Activated CD8-positive, alpha-beta T cell treated with anti-CD3 and anti-CD28 coated beads, Interleukin-2, amount 10 ng/mL, durations not matched to agents 7 days and 5 days (primary cell): ENCODE measurements at regions of chr11 and their contacts with region 1.

Region 1: DNA sequence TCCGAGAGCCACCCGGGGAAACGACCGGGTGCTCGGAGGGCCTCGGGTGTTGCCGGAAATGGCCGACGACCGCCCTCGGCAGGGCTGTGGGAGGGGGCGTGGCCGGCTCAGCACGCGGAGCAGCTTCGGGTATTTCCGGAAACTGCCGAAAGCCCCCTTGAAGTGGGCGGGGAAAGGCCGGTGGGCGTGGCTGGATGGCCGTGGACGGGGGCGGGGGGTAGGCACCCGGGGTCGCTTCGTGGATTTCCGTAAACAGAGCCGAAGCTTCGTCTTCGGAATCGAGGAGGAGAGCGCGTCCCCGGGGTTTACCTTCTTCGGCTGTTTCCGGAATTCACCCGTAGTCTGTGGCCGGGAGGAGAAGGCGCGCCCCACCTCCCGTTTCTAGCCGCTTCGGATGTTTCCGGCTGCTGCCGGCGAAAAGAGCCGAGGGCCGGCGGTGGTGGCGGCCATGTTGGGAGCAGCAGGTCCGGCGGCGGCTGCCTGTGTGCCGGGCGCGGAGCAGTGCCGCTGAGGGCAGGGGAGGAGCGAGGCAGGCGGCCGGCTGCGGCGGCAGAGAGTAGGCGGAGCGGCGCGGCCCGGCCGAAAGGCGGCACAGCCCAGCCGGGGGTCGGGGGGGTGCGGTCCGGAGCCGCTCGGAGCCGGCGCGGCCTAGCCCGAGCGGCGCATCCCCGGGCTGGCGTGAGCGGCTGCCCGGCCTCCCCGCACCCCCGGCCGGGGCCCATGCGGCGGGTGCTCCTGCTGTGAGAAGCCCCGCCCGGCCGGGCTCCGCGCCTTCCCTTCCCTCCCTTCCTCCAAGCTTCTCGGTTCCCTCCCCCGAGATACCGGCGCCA is at the start of gene MARK2:
- DNase-seq: peak; percentile 100
- ATAC-seq: peak; percentile 91
- H3K4me3 Mint-ChIP-seq: peak within 1 kb of the TSS; percentile 86
- H3K27ac Mint-ChIP-seq: peak within 1 kb of the TSS; percentile 85
- H3K4me1 Mint-ChIP-seq: peaks cover 62% of the 10 kb centered on the region
- H3K27me3 Mint-ChIP-seq: no peaks in the 10 kb centered on the region
- total RNA-seq, gene MARK2: 62.1 to 68.6 TPM

Region 2: GRCh38 chr11:63729326-63729725 is 109.6 kb before region 1 on chr11:
- CTCF ChIA-PET with region 1: no interaction called
- POLR2A ChIA-PET with region 1: no interaction called
- DNase-seq: no peak
- ATAC-seq: no peak
- H3K4me3 Mint-ChIP-seq: no peak overlapping the region
- H3K27ac Mint-ChIP-seq: no peak overlapping the region
- H3K4me1 Mint-ChIP-seq: no peaks in the 10 kb centered on the region
- H3K27me3 Mint-ChIP-seq: no peaks in the 10 kb centered on the region

Region 3: DNA sequence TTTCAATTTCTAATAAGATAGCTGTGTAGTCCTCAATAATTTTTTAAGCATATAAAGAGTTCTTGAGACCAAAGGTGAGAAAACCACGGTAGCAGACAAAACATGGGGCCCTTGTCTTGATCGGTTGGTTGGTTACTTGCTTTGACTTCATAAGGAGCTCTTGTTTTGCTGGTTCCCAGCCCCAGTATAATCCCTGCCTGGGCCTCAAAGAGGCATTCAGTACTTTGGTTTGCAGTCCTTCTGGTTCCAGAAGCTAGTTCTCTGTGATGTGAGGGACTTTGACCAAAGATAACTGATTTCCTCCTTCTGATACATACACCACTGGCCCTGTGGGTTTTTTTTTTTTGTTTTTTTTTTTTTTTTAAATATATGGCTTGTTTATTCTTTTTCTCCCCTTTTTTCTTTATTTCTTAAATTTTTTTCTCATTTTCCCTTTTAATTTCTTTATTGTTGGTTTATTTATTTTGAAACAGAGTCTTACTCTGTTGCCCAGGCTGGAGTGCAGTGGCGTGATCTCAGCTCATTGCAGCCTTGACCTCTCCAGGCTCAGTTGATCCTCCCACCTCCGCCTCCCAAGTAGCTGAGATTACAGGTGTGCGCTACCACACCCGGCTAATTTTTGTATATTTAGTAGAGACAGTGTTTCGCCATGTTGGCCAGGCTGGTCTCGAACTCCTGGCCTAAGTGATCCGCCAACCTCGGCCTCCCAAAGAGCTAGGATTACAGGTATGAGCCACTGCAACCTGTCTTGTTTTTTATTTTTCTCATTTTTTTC is 17.3 kb after region 1 on chr11:
- CTCF ChIA-PET with region 1: interaction called, 18 read pairs
- POLR2A ChIA-PET with region 1: interaction called, 5 read pairs
- DNase-seq: no peak
- ATAC-seq: peak; percentile 70
- H3K4me3 Mint-ChIP-seq: no peak overlapping the region
- H3K27ac Mint-ChIP-seq: peak overlapping the region; percentile 70
- H3K4me1 Mint-ChIP-seq: peaks cover 59% of the 10 kb centered on the region
- H3K27me3 Mint-ChIP-seq: no peaks in the 10 kb centered on the region

Region 4: GRCh38 chr11:63882555-63883242 is 43.8 kb after region 1 on chr11:
- CTCF ChIA-PET with region 1: interaction called, 111 read pairs
- POLR2A ChIA-PET with region 1: interaction called, 4 read pairs
- DNase-seq: no peak
- ATAC-seq: peak; percentile 51
- H3K4me3 Mint-ChIP-seq: no peak overlapping the region
- H3K27ac Mint-ChIP-seq: peak overlapping the region; percentile 55
- H3K4me1 Mint-ChIP-seq: peaks cover 73% of the 10 kb centered on the region
- H3K27me3 Mint-ChIP-seq: no peaks in the 10 kb centered on the region

Region 5: DNA sequence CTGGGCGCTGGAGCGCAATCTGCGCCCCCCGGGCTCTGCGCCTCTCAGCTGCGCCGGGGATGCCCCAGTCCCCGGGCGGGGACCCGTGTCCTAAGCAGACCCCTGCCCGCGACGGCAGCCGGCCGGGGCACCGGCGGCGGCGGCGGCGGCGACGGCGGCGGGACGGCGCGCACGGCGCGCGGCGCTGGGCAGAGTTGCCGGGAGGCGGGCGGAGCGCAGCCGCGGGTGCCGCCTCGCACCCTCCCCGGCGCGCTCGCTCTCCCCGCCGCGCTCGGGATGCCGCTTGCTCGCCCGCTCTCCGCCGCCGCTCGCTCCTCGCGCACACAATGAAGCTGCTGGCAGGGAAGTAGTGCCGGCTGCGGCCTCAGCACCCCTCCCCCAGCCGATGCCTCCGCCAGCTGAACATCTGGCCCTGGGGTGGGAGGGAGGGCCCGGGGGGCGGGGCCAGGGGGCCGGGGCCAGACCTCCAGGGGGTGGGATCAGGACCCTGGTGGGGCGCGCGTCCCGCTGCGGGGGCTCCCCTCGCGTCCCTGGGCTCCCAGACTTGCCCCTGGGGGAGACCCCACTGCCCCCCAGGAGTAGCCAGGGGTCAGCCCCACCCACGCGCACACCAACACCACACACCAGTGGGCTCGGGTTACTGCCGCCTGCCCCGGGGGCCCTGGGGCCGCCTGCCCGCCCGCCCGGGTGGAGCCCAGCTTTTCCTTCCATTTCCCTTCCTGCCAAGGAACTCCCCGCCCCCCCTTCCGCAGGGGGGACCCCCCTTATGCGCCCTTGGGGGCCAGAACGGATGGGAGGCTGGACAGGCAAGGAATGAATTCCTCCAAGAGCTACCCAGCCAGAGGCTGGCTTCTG is 78.2 kb after region 1 on chr11 and contains the start of gene RCOR2:
- CTCF ChIA-PET with region 1: interaction called, 49 read pairs
- POLR2A ChIA-PET with region 1: no interaction called
- DNase-seq: peak; percentile 69
- ATAC-seq: peak; percentile 77
- H3K4me3 Mint-ChIP-seq: peak within 1 kb of the TSS; percentile 78
- H3K27ac Mint-ChIP-seq: no peak within 1 kb of the TSS
- H3K4me1 Mint-ChIP-seq: peaks cover 12% of the 10 kb centered on the region
- H3K27me3 Mint-ChIP-seq: peaks cover 8% of the 10 kb centered on the region
- total RNA-seq, gene RCOR2: 0.55 to 0.60 TPM

Region 6: DNA sequence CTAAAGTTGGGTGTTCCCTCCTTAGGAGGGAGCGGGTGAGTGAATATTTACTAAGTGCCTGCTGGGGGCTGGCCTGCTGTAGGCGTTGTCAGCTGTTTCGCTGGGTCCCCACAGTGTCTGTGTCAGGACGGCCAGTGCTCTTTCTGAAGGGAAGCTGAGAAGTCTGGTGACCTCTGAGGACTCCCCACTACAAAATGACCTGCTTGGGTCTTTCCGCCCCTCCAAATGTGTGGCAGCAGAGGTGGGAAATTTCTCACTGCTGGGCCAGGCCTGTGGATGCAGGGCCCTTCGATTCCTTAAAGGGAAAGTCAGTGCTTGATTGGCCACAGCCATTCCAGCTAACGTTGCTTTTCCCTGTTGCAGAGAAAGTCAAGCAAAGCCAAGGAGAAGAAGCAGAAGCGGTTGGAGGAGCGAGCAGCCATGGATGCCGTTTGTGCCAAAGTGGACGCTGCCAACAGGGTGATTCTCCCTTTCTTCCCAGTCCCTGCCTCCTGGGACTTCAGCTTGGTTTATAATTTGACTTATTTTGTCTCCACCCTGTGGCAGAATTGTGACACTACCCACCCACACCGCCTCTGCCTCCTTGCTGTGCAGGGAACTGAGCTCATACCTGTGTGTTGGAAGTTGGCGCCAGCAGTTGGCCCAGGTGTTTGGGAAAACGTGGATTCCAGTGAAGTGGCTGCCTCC is 106.7 kb after region 1 on chr11:
- CTCF ChIA-PET with region 1: interaction called, 188 read pairs
- POLR2A ChIA-PET with region 1: interaction called, 5 read pairs
- DNase-seq: peak; percentile 64
- ATAC-seq: peak; percentile 87
- H3K4me3 Mint-ChIP-seq: no peak overlapping the region
- H3K27ac Mint-ChIP-seq: no peak overlapping the region
- H3K4me1 Mint-ChIP-seq: peaks cover 18% of the 10 kb centered on the region
- H3K27me3 Mint-ChIP-seq: no peaks in the 10 kb centered on the region

Region 7: GRCh38 chr11:64000026-64000739 is 161.3 kb after region 1 on chr11:
- CTCF ChIA-PET with region 1: interaction called, 17 read pairs
- POLR2A ChIA-PET with region 1: no interaction called
- DNase-seq: peak; percentile 76
- ATAC-seq: peak; percentile 85
- H3K4me3 Mint-ChIP-seq: no peak overlapping the region
- H3K27ac Mint-ChIP-seq: no peak overlapping the region
- H3K4me1 Mint-ChIP-seq: peaks cover 26% of the 10 kb centered on the region
- H3K27me3 Mint-ChIP-seq: no peaks in the 10 kb centered on the region